MCF 10A (cell line): ENCODE measurements at regions of chr7 and their contacts with region 1.

Region 1: DNA sequence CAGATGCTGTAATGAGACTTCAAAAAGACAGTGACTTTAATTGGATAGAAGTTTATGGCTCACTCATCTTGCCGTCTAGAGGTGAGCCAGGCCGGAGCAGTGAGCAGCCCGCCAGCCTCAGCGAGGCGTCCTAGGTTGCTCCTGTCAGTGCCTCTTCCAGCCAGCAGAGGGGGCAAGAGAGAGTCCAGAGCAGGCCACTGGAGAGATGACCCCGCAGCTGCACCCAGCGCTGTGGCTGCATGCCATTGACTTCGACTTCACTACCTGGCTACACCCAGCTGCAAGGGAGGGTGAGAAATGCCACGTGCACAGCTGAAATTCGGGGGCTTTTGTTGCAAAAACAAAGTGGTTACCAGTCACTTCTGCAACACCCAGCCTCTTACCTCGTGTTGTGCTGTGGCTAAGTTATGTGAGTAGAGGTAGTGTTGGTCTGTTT is 26.5 kb downstream of the NUB1 start:
- DNase-seq: peak; percentile 81
- H3K4me3 Mint-ChIP-seq: no peak overlapping the region
- H3K27ac Mint-ChIP-seq: no peak overlapping the region
- H3K4me1 Mint-ChIP-seq: no peaks in the 10 kb centered on the region
- H3K27me3 Mint-ChIP-seq: no peaks in the 10 kb centered on the region
- CTCF ChIP-seq: peak; percentile 95

Region 2: GRCh38 chr7:151382079-151382885 is 14.1 kb after region 1 on chr7:
- CTCF ChIA-PET with region 1: interaction called, 11 read pairs
- POLR2A ChIA-PET with region 1: no interaction called
- intact Hi-C with region 1: no loop called
- DNase-seq: no peak
- H3K4me3 Mint-ChIP-seq: no peak overlapping the region
- H3K27ac Mint-ChIP-seq: no peak overlapping the region
- H3K4me1 Mint-ChIP-seq: no peaks in the 10 kb centered on the region
- H3K27me3 Mint-ChIP-seq: no peaks in the 10 kb centered on the region
- CTCF ChIP-seq: no peak

Region 3: GRCh38 chr7:151727579-151728285 is 359.6 kb after region 1 on chr7:
- CTCF ChIA-PET with region 1: no interaction called
- POLR2A ChIA-PET with region 1: no interaction called
- intact Hi-C with region 1: no loop called
- DNase-seq: peak; percentile 99
- H3K4me3 Mint-ChIP-seq: no peak overlapping the region
- H3K27ac Mint-ChIP-seq: peak overlapping the region; percentile 43
- H3K4me1 Mint-ChIP-seq: peaks cover 24% of the 10 kb centered on the region
- H3K27me3 Mint-ChIP-seq: no peaks in the 10 kb centered on the region
- CTCF ChIP-seq: no peak

Region 4: DNA sequence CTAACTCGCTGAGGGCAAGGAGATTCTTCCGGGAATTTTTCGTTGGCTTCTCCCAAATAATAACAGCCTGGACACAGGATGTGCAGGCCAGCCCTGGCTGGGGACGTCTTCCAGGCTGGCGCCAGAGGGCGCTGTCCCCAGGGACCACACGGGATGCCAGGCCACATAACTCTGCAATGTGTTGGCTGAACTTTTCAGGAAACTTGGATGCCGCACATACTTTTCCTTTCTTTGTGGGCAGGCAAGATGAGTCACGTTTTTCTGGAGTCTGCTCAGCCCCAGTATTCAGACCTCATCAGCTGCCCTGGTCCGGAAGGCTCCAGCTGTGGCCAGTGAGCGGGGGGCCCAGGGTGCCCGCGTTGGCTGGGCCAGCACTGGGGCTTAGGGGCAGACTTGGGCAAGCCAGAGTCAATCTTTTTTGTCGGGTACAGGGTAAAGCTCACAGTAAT is 386.0 kb after region 1 on chr7:
- CTCF ChIA-PET with region 1: interaction called, 11 read pairs
- POLR2A ChIA-PET with region 1: no interaction called
- intact Hi-C with region 1: no loop called
- DNase-seq: peak; percentile 97
- H3K4me3 Mint-ChIP-seq: no peak overlapping the region
- H3K27ac Mint-ChIP-seq: no peak overlapping the region
- H3K4me1 Mint-ChIP-seq: peaks cover 20% of the 10 kb centered on the region
- H3K27me3 Mint-ChIP-seq: no peaks in the 10 kb centered on the region
- CTCF ChIP-seq: peak; percentile 93